Activated CD4-positive, alpha-beta T cell treated with anti-CD3 and anti-CD28 coated beads for 36 hours (primary cell): ENCODE measurements at regions of chr2 and their contacts with region 1.

Region 1: DNA sequence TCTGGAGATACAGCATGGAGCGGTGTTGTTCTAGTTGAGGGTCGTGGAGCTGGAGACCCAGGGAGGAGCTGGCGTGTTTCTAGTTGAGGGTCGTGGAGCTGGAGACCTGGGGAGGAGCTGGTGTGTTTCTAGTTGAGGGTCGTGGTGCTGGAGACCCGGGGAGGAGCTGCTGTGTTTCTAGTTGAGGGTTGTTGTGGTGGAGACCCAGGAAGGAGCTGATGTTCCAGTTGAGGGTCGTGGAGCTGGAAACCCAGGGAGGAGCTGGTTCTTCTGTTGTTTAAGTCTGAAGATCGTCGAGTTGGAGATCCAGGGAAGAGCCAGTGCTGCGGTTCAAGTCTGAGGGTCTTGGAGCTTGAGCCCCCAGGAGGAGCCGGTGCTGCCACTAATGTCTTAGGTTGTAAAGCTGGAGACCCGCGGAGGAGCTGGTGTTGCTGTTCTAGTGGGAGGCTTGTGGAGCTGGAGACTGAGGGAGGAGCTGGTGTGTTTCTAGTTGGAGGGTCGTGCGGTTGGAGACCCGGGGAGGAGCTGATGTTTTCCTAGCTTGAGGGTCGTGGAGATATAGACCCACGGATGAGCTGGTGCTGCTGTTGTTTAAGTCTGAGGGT is 155.3 kb downstream of the RTP5 start:
- DNase-seq: no peak
- ATAC-seq: no peak
- H3K4me3 Mint-ChIP-seq: no peak overlapping the region
- H3K27ac Mint-ChIP-seq: no peak overlapping the region
- H3K4me1 Mint-ChIP-seq: peaks cover 7% of the 10 kb centered on the region
- H3K27me3 Mint-ChIP-seq: no peaks in the 10 kb centered on the region

Region 2: DNA sequence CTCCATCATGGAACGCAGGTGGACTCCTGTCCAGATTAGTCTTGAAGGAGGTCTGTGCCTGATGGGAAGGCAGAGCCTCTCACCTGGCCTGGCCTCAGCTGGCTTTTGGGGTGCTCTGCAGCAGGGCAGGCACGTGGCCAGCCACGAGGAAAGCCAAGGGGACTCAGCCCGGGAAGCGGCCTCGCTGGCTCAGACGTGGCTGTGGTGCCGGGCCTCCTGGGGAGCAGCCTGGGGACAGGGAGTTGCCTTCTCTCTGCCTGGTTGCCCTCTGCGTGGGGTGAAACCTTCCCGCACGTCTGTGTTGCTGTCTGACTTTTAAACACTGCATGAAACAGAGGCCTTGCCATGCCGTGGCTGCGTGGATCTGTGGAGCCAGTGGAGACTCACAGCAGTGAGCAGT is 110.3 kb before region 1 on chr2:
- CTCF ChIA-PET with region 1: no interaction called
- POLR2A ChIA-PET with region 1: interaction called, 10 read pairs
- intact Hi-C with region 1: no loop called
- DNase-seq: no peak
- ATAC-seq: no peak
- H3K4me3 Mint-ChIP-seq: no peak overlapping the region
- H3K27ac Mint-ChIP-seq: no peak overlapping the region
- H3K4me1 Mint-ChIP-seq: peaks cover 1% of the 10 kb centered on the region
- H3K27me3 Mint-ChIP-seq: no peaks in the 10 kb centered on the region